ENCODE measurements at regions of chr5 and their contacts with region 1.

Region 1: DNA sequence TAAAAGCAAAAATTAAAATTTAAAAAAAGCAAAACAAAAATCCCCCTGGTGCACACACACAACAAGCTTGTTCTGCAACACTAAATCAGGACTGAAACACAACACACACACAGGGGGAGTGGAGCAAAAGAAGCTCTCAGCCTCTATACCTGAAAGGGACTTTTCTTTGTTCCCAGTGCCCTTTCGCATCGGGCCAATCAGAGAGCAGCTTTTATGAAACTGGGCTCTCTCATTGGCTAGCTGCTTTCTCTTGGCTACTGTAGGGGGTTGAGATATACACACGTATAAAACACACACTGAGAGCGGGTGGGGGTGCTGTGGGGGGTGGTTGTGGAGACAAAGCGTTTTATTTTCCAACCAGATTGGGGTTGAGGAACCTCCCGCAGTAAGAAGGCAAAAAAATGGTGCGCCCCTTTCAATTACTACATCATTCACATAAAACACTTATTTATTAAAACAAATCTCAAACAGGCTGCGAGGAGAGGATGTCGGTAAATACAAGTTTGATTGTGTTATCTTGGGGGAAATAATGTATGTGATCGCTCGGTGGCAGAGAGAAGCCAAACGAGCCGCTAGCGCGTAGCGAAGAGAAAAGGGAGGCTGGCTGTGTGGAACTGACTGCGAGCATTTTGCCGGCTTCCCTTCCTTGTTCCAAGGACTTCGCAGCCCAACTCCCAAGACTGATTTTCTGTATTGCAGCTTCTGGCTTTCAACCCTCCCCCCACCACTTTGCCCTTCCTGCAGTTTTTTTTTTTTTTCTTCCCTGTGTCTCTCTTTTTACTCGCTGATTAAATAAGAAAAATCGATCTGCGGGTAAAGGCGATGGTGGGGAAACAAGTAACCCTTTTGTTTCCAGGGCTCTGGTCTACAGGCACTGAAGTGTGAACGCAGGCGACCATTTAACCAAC is 2.5 kb upstream of the ZNF608 start:
- DNase-seq: peak; percentile 80
- H3K4me3 ChIP-seq: peak overlapping the region; percentile 67 to 92
- H3K27ac ChIP-seq: peak overlapping the region; percentile 85 to 97
- H3K4me1 ChIP-seq: peaks cover 0 to 19% of the 10 kb centered on the region in 2 experiments; a peak in 2 of 4 replicates
- H3K27me3 ChIP-seq: no peaks in the 10 kb centered on the region
- CTCF ChIP-seq: no peak
- EP300 ChIP-seq: peak in 1 of 2 experiments; percentile 13; a peak in 2 of 4 replicates
- RAD21 ChIP-seq: peak; percentile 42

Region 2: GRCh38 chr5:124561451-124561850 is 187.5 kb before region 1 on chr5:
- CTCF ChIA-PET with region 1: no interaction called
- POLR2A ChIA-PET with region 1: no interaction called
- DNase-seq: no peak
- H3K4me3 ChIP-seq: no peak overlapping the region
- H3K27ac ChIP-seq: no peak overlapping the region
- H3K4me1 ChIP-seq: no peaks in the 10 kb centered on the region
- H3K27me3 ChIP-seq: no peaks in the 10 kb centered on the region
- CTCF ChIP-seq: no peak
- EP300 ChIP-seq: no peak
- RAD21 ChIP-seq: no peak

Region 3: GRCh38 chr5:124614105-124614504 is 134.8 kb before region 1 on chr5:
- CTCF ChIA-PET with region 1: no interaction called
- POLR2A ChIA-PET with region 1: no interaction called
- DNase-seq: no peak
- H3K4me3 ChIP-seq: no peak overlapping the region
- H3K27ac ChIP-seq: no peak overlapping the region
- H3K4me1 ChIP-seq: peaks cover 0 to 2% of the 10 kb centered on the region in 2 experiments; a peak in 2 of 4 replicates
- H3K27me3 ChIP-seq: no peaks in the 10 kb centered on the region
- CTCF ChIP-seq: no peak
- EP300 ChIP-seq: no peak
- RAD21 ChIP-seq: no peak

Region 4: GRCh38 chr5:124806373-124807077 is 57.6 kb after region 1 on chr5:
- CTCF ChIA-PET with region 1: no interaction called
- POLR2A ChIA-PET with region 1: interaction called, 10 read pairs
- DNase-seq: peak; percentile 78
- H3K4me3 ChIP-seq: no peak overlapping the region
- H3K27ac ChIP-seq: peak overlapping the region in 1 of 2 experiments; percentile 89; a peak in 2 of 4 replicates
- H3K4me1 ChIP-seq: peaks cover 0 to 13% of the 10 kb centered on the region in 2 experiments; a peak in 2 of 4 replicates
- H3K27me3 ChIP-seq: no peaks in the 10 kb centered on the region
- CTCF ChIP-seq: no peak
- EP300 ChIP-seq: peak in 1 of 2 experiments; percentile 15; a peak in 1 of 4 replicates
- RAD21 ChIP-seq: peak; percentile 39

Region 5: DNA sequence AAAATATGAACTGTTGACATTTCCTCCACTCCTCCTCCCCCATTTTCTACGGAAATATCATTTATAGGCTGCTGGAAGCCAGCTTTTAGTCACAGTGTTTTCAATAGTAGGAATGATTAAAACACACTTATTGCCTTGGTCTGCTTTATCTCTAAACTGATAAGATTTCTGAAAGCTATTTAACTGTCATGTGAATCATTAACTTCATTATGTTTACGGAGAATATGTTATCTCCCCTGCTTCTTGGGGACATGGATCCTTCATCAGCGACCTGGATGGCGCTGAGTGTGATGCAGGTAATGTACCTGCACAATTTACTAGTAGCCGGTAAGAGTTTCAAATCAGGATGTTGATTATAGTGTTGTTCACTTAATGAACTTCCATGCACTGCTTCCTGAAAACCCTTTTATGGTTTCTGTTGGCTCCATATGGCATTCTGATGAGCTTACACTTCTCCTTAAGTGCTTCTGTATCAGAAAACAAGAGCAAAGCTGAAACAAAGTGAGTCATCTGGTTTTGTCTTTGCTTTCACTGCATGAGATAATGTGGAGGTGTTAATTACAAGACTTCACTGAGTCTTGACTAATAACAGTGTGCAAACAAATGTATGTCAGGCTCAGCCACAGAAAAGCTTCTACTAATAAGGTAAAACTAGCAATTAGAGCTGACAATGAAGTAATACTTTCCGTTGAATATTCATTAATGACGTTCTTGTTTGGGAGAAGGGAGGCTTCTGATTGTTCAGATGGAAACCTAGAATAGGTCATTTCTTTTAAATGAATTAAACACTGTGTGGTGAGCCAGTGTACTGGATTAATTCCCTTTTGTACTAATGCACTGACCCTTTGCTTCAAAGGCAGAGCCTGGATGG is 159.9 kb after region 1 on chr5:
- CTCF ChIA-PET with region 1: no interaction called
- POLR2A ChIA-PET with region 1: interaction called, 17 read pairs
- DNase-seq: peak; percentile 60
- H3K4me3 ChIP-seq: no peak overlapping the region
- H3K27ac ChIP-seq: peak overlapping the region in 1 of 2 experiments; percentile 76; a peak in 2 of 4 replicates
- H3K4me1 ChIP-seq: peaks cover 24 to 26% of the 10 kb centered on the region in 2 experiments
- H3K27me3 ChIP-seq: no peaks in the 10 kb centered on the region
- CTCF ChIP-seq: no peak
- EP300 ChIP-seq: peak in 1 of 2 experiments; percentile 96; a peak in 2 of 4 replicates
- RAD21 ChIP-seq: peak; percentile 44

Region 6: DNA sequence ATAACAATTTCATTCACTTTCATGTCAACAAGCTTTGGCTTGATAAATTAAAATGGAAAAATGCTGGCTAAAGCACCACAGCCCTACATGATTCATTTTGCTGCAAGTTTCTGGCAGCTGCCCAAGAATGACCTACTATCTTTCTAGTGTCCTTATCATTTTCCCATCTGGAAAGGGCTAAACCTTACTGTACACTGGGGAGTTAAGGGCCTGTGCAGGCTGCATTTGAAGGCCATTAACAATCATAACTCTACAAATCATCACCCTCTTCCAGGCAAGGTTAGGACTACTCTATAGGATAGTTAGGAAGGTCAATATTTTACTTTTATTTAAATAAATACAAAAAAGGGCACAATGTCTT is 577.2 kb after region 1 on chr5:
- CTCF ChIA-PET with region 1: no interaction called
- POLR2A ChIA-PET with region 1: interaction called, 12 read pairs
- DNase-seq: peak; percentile 47
- H3K4me3 ChIP-seq: no peak overlapping the region
- H3K27ac ChIP-seq: peak overlapping the region; percentile 30 to 86; a peak in 3 of 4 replicates
- H3K4me1 ChIP-seq: peaks cover 14 to 25% of the 10 kb centered on the region in 2 experiments; a peak in 3 of 4 replicates
- H3K27me3 ChIP-seq: no peaks in the 10 kb centered on the region
- CTCF ChIP-seq: no peak
- EP300 ChIP-seq: peak; percentile 93 to 97
- RAD21 ChIP-seq: peak; percentile 55; the same call in 1 of the 2 replicates

Region 7: GRCh38 chr5:125484742-125485641 is 736.1 kb after region 1 on chr5:
- CTCF ChIA-PET with region 1: no interaction called
- POLR2A ChIA-PET with region 1: interaction called, 18 read pairs
- DNase-seq: peak; percentile 32
- H3K4me3 ChIP-seq: peak overlapping the region; percentile 9 to 29
- H3K27ac ChIP-seq: peak overlapping the region; percentile 83 to 100
- H3K4me1 ChIP-seq: peaks cover 29 to 64% of the 10 kb centered on the region in 2 experiments; a peak in 3 of 4 replicates
- H3K27me3 ChIP-seq: no peaks in the 10 kb centered on the region
- CTCF ChIP-seq: no peak
- EP300 ChIP-seq: peak; percentile 94 to 100
- RAD21 ChIP-seq: peak; percentile 45; the same call in 1 of the 2 replicates

Measured in SK-N-SH (cell line).